ENCODE measurements at regions of chr22 and their contacts with region 1.

Region 1: DNA sequence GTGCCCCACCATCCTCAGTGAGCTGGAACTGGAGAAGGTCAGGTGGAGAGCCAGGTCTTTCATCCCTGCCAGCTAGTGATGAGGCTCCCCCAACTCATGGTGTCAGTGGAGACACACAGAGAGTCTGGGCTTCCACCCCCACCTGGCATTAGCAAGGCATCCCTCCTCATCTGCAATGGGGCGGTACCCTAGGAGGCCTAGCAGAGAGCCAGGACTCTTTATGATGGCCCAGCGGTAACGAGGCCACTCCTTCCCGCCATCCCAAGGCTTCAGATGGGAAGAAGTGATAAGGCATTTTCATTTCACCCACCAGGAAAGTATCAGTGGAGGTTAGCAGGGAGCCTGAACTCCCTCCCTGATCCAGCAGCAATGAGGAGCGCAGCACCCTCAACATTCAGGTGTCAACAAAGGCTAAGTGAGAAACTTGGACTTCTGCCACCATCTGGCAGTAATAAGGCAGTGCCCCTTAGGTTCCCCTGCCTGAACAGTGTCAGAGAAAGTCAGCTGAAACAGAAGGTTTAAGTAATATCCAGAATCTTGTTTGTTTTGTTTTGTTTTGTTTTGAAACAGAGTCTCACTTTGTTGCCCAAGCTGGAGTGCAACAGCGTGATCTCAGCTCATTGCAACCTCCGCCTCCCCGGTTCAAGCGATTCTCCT is 40.5 kb upstream of the FBLN1 start:
- DNase-seq: no peak
- H3K4me3 ChIP-seq: no peak overlapping the region
- H3K27ac ChIP-seq: no peak overlapping the region
- H3K4me1 ChIP-seq: peaks cover 0 to 4% (median under 1%) of the 10 kb centered on the region in 4 experiments; a peak in 2 of 7 replicates
- H3K27me3 ChIP-seq: no peaks in the 10 kb centered on the region
- CTCF ChIP-seq: peak in 2 of 3 experiments; percentile 60 to 83; a peak in 3 of 4 replicates
- EP300 ChIP-seq: no peak
- POLR2A ChIP-seq: no peak
- RAD21 ChIP-seq: peak; percentile 31 to 59

Region 2: DNA sequence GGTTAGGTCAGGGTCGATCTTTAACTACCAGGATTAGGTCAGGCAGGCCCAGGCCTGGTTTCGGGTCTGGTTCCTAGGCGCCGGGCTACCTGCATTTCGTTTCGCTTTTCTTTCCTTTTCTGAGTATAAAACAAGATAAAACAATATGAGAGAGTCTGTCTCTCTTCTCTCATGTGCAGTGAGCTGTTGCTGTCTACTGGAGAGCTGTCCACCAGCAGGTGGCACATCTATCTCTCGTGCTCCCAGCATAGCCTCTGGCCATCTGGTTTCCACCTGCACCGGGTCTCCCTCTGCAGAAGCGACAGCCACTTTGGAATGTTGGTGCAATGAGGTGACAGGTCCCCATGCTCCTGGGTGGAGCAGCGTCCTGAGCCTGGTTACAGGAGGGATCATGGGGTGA is 21.0 kb before region 1 on chr22:
- CTCF ChIA-PET with region 1: interaction called, 10 read pairs
- POLR2A ChIA-PET with region 1: no interaction called
- DNase-seq: no peak
- H3K4me3 ChIP-seq: no peak overlapping the region
- H3K27ac ChIP-seq: no peak overlapping the region
- H3K4me1 ChIP-seq: no peaks in the 10 kb centered on the region; a peak in 2 of 7 replicates
- H3K27me3 ChIP-seq: no peaks in the 10 kb centered on the region
- CTCF ChIP-seq: peak; percentile 44 to 70 (median 58)
- EP300 ChIP-seq: no peak
- POLR2A ChIP-seq: no peak
- RAD21 ChIP-seq: peak; percentile 56 to 67

Region 3: DNA sequence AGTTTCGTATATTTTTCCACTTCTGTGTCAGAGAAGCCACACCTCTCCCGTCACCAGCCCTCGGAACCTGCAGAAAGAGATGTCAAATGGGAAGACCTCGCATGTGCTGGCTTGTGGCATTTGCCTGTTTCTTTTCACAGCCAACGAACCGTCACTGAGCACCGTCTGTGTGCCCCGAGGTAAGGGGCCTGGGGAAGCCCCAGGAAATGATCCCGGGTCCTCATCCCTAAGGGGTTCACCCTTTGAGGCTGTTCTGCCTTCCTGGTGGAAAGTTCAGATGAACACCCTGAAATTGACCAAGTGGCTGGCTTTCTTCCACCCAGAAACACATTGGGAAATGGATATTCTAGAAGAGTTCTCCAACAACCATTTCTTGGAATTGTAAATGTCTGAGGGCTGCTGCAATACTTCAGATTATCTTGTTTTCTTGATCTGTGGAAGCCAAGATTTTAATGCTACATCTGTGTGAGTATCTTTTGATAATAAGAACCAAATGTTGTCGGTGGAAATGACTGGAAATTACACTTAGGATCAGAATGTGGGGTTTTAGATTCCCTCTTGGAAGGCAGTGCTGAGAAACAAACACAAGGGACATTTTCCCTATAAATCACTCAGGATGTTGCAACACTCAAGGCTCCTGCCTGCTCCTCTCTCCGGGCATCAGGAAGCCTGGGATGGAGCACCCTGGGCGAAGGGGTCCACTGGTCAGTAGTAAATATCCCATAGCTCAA is 11.1 kb before region 1 on chr22:
- CTCF ChIA-PET with region 1: interaction called, 16 read pairs
- POLR2A ChIA-PET with region 1: no interaction called
- DNase-seq: no peak
- H3K4me3 ChIP-seq: no peak overlapping the region
- H3K27ac ChIP-seq: no peak overlapping the region
- H3K4me1 ChIP-seq: no peaks in the 10 kb centered on the region
- H3K27me3 ChIP-seq: no peaks in the 10 kb centered on the region
- CTCF ChIP-seq: no peak
- EP300 ChIP-seq: no peak
- POLR2A ChIP-seq: no peak
- RAD21 ChIP-seq: no peak

Region 4: GRCh38 chr22:45475063-45475747 is 13.0 kb after region 1 on chr22:
- CTCF ChIA-PET with region 1: interaction called, 16 read pairs
- POLR2A ChIA-PET with region 1: interaction called, 4 read pairs
- DNase-seq: no peak
- H3K4me3 ChIP-seq: no peak overlapping the region
- H3K27ac ChIP-seq: no peak overlapping the region
- H3K4me1 ChIP-seq: peaks cover 0 to 2% (median 1%) of the 10 kb centered on the region in 4 experiments; a peak in 1 of 7 replicates
- H3K27me3 ChIP-seq: no peaks in the 10 kb centered on the region
- CTCF ChIP-seq: no peak
- EP300 ChIP-seq: no peak
- POLR2A ChIP-seq: no peak
- RAD21 ChIP-seq: no peak